Left cardiac atrium (tissue), 4 donors: ENCODE measurements at regions of chr19 and their contacts with region 1.

Region 1: DNA sequence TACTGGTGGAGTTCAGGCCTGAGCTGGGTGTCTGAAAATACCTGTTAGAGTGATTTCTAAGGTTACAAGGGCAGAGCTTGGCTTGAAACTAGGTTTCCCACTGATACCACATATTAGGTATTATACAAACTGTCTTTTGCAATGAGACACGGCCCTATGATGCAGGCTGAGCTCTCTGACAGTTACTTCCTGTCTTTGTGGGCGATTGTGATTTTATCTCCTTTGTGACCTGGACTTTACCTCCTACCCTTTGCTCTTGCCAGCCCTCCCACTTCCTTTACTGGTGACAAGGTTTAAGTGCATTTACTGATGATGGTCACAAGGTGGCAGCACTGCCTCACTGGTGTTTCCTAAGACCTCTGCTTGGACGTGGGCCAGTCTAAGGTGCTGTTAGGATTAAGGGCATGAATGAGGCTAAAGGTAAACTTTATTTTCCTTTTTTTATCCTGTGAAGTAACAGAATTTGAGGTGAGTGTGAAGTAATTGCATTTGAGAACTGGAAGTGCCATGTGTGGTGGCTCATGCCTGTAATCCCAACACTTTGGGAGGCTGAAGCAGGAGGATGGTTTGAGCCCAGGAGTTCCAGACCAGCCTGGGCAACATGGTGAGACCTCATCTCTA is 7.7 kb upstream of the CXCL17 start:
- DNase-seq: peak; percentile 86
- ATAC-seq: peak; percentile 84 to 90

Region 2: DNA sequence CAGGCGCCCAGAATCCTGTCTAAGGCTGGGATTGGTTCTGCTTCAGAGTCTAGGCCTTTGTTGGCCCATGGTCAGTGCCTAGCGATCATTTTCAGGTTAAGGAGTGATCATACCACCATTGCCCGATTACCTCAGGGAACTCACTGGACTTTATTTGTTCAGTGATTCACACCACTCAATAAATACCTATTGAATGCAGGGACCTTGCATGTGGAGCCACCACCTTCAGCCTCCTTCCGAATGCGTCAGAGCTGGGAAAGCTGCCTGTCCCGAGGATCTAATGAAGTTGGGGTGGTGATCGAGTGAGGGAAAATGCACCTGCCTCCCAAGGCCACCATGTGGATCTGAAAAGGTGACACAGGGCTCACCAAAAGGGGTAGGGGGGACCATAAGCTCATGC is 278.2 kb before region 1 on chr19:
- intact Hi-C with region 1: no loop called
- DNase-seq: no peak
- ATAC-seq: no peak

Region 3: GRCh38 chr19:42529248-42529764 is 78.9 kb after region 1 on chr19:
- intact Hi-C with region 1: loop called (anchors 1 to 2 kb)
- DNase-seq: peak; percentile 48
- ATAC-seq: peak; percentile 78 to 83

Region 4: DNA sequence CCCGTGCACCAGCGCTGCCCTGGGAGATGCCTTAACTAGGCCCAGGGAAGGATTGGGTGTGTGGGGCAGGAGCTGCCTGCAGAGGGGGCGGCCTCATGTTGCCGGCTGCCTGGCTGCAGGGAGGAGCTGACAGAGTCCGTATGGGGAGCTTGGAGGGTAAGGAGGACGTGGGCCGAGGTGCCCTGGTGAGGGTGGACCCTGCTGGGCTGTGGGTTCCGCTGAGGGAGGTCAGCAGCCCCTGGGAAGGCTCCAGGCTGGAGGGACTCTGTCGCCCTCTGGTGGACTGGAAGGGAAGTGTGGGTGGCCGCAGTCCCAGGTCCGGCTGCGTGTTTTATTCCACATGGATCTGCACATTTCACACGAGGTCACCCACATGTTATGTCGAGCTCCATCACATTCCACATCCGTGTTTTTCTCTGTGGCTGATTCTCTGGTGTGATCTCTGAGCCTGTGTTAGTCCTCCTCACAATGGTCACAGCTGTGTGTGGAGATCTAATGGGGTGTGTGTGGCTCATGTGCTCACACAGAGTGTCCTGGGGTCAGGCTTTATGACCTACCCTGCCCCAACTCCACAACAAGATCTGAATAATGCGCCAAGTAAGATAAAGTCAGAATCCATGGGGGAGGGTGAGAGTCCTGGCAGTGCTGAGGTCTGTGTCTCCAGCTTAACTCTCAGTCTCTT is 146.1 kb after region 1 on chr19:
- intact Hi-C with region 1: loop called in 1 of 2 experiments (anchors 5 kb)
- DNase-seq: peak; percentile 36
- ATAC-seq: peak; percentile 34 to 39